Pancreas (tissue), 10 donors: ENCODE measurements at regions of chr1 and their contacts with region 1.

Region 1: DNA sequence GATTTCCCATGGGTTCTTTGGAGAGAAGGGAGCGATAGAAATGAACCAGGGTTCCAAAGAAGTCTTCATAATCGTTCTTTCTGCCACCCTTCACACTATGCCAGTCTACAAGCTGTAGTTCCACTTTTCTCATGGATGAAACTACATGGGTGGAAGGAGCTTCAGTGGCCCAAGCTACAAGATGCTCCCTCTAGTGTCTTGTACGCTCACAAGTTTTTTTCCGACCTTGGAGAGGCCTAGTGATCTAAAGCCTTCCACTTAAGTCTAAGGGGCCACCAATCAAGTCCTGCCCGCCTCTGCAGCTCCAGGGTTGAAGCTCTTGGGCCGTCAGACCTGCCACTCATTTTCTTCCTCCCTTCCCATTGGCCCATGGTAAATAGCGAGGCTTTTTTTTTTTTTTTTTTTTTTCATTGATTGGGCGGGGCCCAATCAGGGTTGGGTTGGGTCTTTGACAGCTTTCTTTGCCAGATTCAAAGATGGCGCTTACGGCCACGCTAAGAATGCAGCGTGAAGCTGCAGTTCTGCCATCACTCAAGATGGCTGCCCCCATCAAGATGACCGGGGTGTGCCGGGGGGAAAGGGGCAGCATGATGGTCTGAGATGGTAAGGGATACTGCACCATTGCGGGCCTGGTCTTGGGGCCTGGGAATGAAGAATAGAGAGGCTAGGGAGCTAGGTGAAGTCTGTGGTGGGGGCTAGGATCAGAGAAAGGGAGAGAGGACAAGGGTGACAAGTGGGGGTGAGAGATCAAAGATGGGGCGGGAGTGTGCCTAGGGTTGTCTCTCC is at the start of gene TOMM40L:
- DNase-seq: peak; percentile 81 to 89 (median 86)
- ATAC-seq: peak; percentile 88 to 92 (median 90)
- H3K4me3 ChIP-seq: peak within 1 kb of the TSS; percentile 30 to 62 (median 42)
- H3K27ac ChIP-seq: peak within 1 kb of the TSS in 2 of 4 donors; percentile 11 to 26
- H3K4me1 ChIP-seq: peaks cover 0 to 11% (median 0%) of the 10 kb centered on the region in 3 donors
- H3K27me3 ChIP-seq: no peaks in the 10 kb centered on the region
- CTCF ChIP-seq: no peak
- total RNA-seq, gene TOMM40L: 1.4 to 5.6 (median 2.6) TPM

Region 2: GRCh38 chr1:161287482-161288054 is 61.8 kb after region 1 on chr1:
- intact Hi-C with region 1: loop called in 1 of 3 experiments (anchors 10 kb)
- DNase-seq: no peak
- ATAC-seq: no peak
- H3K4me3 ChIP-seq: no peak overlapping the region
- H3K27ac ChIP-seq: no peak overlapping the region
- H3K4me1 ChIP-seq: no peaks in the 10 kb centered on the region
- H3K27me3 ChIP-seq: no peaks in the 10 kb centered on the region
- CTCF ChIP-seq: no peak

Region 3: DNA sequence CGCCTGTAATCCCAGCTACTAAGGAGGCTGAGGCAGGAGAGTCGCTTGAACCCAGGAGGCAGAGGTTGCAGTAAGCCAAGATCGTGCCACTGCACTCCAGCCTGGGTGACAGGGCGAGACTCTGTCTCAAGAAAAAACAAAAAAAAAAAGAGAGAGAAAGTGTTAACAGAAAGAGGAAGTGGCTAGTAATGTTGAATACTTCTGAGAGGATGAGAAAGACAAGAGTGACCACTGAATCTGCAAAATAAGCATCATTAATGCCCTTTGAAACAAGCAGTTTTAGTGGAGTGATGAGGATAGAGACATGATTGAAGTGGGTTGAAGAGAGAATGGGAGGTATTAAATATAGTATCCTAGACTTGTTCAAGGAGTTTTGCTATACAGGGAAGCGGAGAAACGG is 72.4 kb after region 1 on chr1:
- intact Hi-C with region 1: loop called in 1 of 3 experiments (anchors 5 kb)
- DNase-seq: no peak
- ATAC-seq: no peak
- H3K4me3 ChIP-seq: no peak overlapping the region
- H3K27ac ChIP-seq: no peak overlapping the region
- H3K4me1 ChIP-seq: no peaks in the 10 kb centered on the region
- H3K27me3 ChIP-seq: no peaks in the 10 kb centered on the region
- CTCF ChIP-seq: no peak

Region 4: GRCh38 chr1:161350671-161351070 is 124.9 kb after region 1 on chr1:
- intact Hi-C with region 1: no loop called
- DNase-seq: no peak
- ATAC-seq: no peak
- H3K4me3 ChIP-seq: no peak overlapping the region
- H3K27ac ChIP-seq: no peak overlapping the region
- H3K4me1 ChIP-seq: no peaks in the 10 kb centered on the region
- H3K27me3 ChIP-seq: no peaks in the 10 kb centered on the region
- CTCF ChIP-seq: no peak

Region 5: DNA sequence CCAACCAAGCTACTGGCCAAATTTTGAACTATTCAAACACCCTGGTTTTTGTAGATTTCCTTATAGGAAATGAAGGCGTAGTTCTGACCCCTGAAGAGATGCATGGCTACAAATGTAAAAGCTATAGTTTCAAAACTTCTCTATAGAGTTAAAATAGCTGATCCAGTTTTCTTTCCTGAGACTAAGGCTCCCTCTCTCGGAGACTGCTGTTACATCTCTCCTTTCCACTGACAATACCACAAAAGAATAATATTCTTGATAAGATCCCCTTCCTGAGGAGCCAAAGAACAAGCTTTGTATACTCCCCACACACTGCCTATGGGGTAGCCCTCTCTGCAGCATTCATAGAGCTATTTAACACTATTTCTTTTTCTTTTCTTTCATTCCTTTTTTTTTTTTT is 148.6 kb after region 1 on chr1:
- intact Hi-C with region 1: loop called in 1 of 3 experiments (anchors 10 kb)
- DNase-seq: no peak
- ATAC-seq: peak in 1 of 4 donors; percentile 25
- H3K4me3 ChIP-seq: no peak overlapping the region
- H3K27ac ChIP-seq: no peak overlapping the region
- H3K4me1 ChIP-seq: peaks cover 0 to 5% (median 0%) of the 10 kb centered on the region in 3 donors
- H3K27me3 ChIP-seq: no peaks in the 10 kb centered on the region
- CTCF ChIP-seq: no peak